ENCODE measurements at regions of chr11 and their contacts with region 1.

Region 1: DNA sequence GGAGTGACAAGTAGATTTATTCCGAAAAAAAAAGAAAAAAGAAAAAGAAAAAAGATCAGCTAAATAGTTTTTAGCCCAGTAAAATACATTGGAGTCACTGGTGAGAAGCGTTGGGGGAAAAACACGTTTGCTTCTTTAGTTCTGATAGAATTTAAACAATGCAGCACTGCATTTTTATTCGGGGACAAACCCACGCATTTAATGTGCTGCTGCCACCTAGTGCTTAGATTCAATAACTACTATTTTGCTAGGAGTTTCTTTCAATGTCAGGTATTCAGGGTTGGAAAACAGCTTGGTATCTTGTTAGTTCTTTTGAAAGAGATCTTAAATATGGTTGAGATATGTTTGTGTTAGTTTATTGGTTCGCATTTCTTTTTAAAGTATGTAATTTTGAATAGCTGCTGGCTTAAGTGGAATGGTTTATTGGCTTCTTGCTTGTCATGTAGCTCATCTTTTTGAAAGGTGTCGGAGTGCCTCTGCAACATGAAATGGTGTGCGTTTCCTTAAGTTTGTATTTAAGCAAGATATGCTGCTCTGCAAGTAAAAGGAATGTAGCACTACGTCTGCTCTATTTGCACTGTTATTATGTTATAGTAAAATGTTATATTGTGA is 41.9 kb downstream of the SVIP start:
- DNase-seq: peak in 1 of 2 donors; percentile 65
- ATAC-seq: peak in 2 of 3 donors; percentile 58 to 69
- H3K4me3 ChIP-seq: no peak overlapping the region
- H3K4me3 Mint-ChIP-seq: no peak overlapping the region
- H3K27ac ChIP-seq: no peak overlapping the region
- H3K27ac Mint-ChIP-seq: no peak overlapping the region
- H3K4me1 ChIP-seq: no peaks in the 10 kb centered on the region
- H3K4me1 Mint-ChIP-seq: peaks cover 0 to 4% of the 10 kb centered on the region in 2 donors
- H3K27me3 ChIP-seq: no peaks in the 10 kb centered on the region
- H3K27me3 Mint-ChIP-seq: no peaks in the 10 kb centered on the region
- CTCF ChIP-seq: peak; percentile 87

Region 2: GRCh38 chr11:22244986-22245592 is 542.6 kb before region 1 on chr11:
- intact Hi-C with region 1: loop called (anchors 1 kb)
- DNase-seq: peak in 1 of 2 donors; percentile 33
- ATAC-seq: peak in 2 of 3 donors; percentile 50 to 67
- H3K4me3 ChIP-seq: no peak overlapping the region
- H3K4me3 Mint-ChIP-seq: no peak overlapping the region
- H3K27ac ChIP-seq: no peak overlapping the region
- H3K27ac Mint-ChIP-seq: no peak overlapping the region
- H3K4me1 ChIP-seq: no peaks in the 10 kb centered on the region
- H3K4me1 Mint-ChIP-seq: no peaks in the 10 kb centered on the region
- H3K27me3 ChIP-seq: no peaks in the 10 kb centered on the region
- H3K27me3 Mint-ChIP-seq: no peaks in the 10 kb centered on the region
- CTCF ChIP-seq: peak; percentile 22